ENCODE measurements at regions of chr5 and their contacts with region 1.

Region 1: DNA sequence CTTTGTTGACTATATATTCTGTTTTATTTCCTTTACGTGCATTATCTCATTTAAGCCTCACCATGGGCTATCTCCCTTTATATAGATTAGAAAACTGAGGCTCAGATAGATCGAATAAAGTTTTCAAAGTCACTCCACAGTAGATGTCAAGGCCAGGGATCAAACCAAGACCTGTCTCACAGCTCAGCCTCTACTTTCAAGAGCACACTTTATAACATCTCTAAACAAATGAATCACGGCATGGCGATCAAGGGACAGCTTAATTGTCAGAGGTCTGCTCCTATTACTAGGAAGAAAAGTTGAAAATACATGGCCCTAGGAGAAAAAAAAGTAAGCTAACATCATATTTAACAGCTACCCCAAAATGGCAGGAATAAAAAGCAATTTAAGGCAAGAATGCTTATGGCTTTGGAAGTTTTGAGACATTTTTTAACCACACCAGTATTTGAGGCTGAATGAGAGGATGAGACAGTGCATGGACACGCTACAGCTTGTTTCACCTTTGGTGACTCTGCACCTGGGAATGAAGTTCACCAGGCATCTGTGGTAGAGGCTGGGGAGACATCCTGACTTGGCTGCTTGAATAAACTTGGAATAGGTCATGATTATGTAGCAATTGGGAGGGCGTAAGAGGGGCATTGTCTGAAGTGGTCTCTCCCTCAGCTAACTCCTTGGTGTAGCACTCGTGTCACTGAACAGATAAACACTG is 486.8 kb upstream of the WWC1 start:
- DNase-seq: peak; percentile 95
- H3K4me3 ChIP-seq: no peak overlapping the region
- H3K27ac ChIP-seq: peak overlapping the region; percentile 96
- H3K4me1 ChIP-seq: peaks cover 41% of the 10 kb centered on the region
- H3K27me3 ChIP-seq: no peaks in the 10 kb centered on the region
- CTCF ChIP-seq: no peak

Region 2: DNA sequence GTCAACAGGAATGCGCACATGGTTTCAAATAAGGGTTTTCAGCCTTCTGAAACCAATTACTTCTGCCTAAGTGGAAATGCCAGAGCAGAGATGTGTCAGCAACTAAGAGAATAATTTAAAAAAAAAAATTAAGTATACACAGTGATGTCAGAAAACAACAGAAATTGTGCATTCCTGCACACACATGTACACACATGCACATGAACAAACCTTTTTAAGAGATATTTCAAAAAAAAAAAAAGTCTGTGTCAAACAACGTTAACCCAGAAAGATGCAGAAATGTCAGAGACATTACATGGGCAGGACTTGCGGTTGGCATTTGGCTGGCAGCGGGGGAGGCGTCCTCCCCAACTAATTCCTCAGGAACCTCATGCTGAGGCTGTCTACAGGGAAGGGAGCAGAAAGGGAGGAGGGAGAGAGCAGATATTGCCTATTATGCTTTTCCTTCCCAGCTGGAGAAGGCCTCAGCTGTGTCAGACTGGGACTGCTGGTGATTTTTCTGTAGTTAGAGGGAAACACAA is 50.1 kb before region 1 on chr5:
- CTCF ChIA-PET with region 1: no interaction called
- dilution Hi-C with region 1: no loop called
- in situ Hi-C with region 1: no loop called
- intact Hi-C with region 1: loop called (anchors 1 kb)
- DNase-seq: no peak
- H3K4me3 ChIP-seq: no peak overlapping the region
- H3K27ac ChIP-seq: no peak overlapping the region
- H3K4me1 ChIP-seq: peaks cover 15% of the 10 kb centered on the region
- H3K27me3 ChIP-seq: no peaks in the 10 kb centered on the region
- CTCF ChIP-seq: no peak

Region 3: DNA sequence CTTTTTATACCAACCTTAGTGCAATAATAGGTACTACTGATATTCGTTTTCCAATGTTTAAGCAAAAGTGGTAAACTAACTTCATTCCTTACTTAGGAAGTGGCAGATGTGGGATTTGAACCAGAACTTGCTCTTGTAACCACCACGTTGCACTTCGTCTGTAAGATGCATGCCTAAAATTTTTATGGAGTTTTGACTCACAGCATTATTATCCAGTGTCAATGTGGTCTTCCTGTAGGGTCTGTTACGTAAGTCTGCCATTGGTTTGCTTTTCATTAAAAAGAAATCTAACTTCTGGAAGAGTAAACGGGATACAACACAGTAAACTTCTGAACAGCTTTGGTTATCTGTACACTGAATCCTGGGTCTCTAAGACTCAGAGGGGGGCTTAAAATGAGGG is 34.2 kb before region 1 on chr5:
- CTCF ChIA-PET with region 1: no interaction called
- dilution Hi-C with region 1: loop called (anchors 5 kb)
- in situ Hi-C with region 1: no loop called
- intact Hi-C with region 1: no loop called
- DNase-seq: no peak
- H3K4me3 ChIP-seq: no peak overlapping the region
- H3K27ac ChIP-seq: no peak overlapping the region
- H3K4me1 ChIP-seq: peaks cover 3% of the 10 kb centered on the region
- H3K27me3 ChIP-seq: no peaks in the 10 kb centered on the region
- CTCF ChIP-seq: no peak

Region 4: GRCh38 chr5:169667896-169668674 is 1863.4 kb after region 1 on chr5:
- CTCF ChIA-PET with region 1: no interaction called
- dilution Hi-C with region 1: no loop called
- in situ Hi-C with region 1: no loop called
- intact Hi-C with region 1: no loop called
- DNase-seq: no peak
- H3K4me3 ChIP-seq: no peak overlapping the region
- H3K27ac ChIP-seq: no peak overlapping the region
- H3K4me1 ChIP-seq: no peaks in the 10 kb centered on the region
- H3K27me3 ChIP-seq: no peaks in the 10 kb centered on the region
- CTCF ChIP-seq: no peak

Measured in mammary epithelial cell (primary cell).